H1 (cell line): ENCODE measurements at regions of chr22 and their contacts with region 1.

Region 1: GRCh38 chr22:25903294-25903693 is 161.3 kb downstream of the MYO18B start:
- DNase-seq: peak; percentile 31 to 90
- H3K4me3 ChIP-seq: no peak overlapping the region
- H3K27ac ChIP-seq: no peak overlapping the region
- H3K4me1 ChIP-seq: 0 out of 7 replicates have a peak, but pooled peaks cover 0 to 4% (median 0%) of the 10 kb centered on the region in 4 experiments
- H3K27me3 ChIP-seq: no peaks in the 10 kb centered on the region
- CTCF ChIP-seq: peak; percentile 87 to 92 (median 88)
- EP300 ChIP-seq: no peak
- POLR2A ChIP-seq: no peak
- RAD21 ChIP-seq: peak; percentile 61 to 78

Region 2: GRCh38 chr22:25797498-25798290 is 105.6 kb before region 1 on chr22:
- CTCF ChIA-PET with region 1: no interaction called
- POLR2A ChIA-PET with region 1: no interaction called
- DNase-seq: no peak
- H3K4me3 ChIP-seq: no peak overlapping the region
- H3K27ac ChIP-seq: no peak overlapping the region
- H3K4me1 ChIP-seq: no peaks in the 10 kb centered on the region
- H3K27me3 ChIP-seq: no peaks in the 10 kb centered on the region; a peak in 1 of 7 replicates
- CTCF ChIP-seq: no peak
- EP300 ChIP-seq: no peak
- POLR2A ChIP-seq: no peak
- RAD21 ChIP-seq: no peak

Region 3: DNA sequence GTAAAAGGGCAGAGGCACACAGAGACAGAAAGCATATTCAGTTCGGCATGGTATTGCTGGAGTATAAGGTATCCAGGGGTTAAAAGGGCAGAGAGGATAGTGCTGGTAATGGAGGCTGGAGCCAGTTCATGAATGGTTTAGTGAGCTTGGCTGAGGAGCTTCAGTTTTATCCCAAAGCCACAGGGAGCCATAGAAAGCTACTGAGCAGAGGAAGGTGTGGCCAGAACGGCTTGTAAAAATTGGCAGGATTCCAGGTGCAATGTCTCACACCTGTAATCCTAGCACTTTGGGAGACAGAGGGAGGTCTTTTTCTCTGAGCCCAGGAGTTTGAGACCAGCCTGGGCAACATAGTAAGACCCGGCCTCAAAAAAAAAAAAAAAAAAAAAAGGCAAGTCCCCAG is 24.7 kb after region 1 on chr22:
- CTCF ChIA-PET with region 1: interaction called, 12 read pairs
- POLR2A ChIA-PET with region 1: no interaction called
- DNase-seq: no peak
- H3K4me3 ChIP-seq: peak overlapping the region in 1 of 4 experiments; percentile 41; a peak in 1 of 8 replicates
- H3K27ac ChIP-seq: peak overlapping the region; percentile 60; the same call in 1 of the 2 replicates
- H3K4me1 ChIP-seq: peaks cover 2 to 24% (median 11%) of the 10 kb centered on the region in 4 experiments
- H3K27me3 ChIP-seq: no peaks in the 10 kb centered on the region; a peak in 2 of 7 replicates
- CTCF ChIP-seq: no peak
- EP300 ChIP-seq: no peak
- POLR2A ChIP-seq: no peak
- RAD21 ChIP-seq: no peak

Region 4: DNA sequence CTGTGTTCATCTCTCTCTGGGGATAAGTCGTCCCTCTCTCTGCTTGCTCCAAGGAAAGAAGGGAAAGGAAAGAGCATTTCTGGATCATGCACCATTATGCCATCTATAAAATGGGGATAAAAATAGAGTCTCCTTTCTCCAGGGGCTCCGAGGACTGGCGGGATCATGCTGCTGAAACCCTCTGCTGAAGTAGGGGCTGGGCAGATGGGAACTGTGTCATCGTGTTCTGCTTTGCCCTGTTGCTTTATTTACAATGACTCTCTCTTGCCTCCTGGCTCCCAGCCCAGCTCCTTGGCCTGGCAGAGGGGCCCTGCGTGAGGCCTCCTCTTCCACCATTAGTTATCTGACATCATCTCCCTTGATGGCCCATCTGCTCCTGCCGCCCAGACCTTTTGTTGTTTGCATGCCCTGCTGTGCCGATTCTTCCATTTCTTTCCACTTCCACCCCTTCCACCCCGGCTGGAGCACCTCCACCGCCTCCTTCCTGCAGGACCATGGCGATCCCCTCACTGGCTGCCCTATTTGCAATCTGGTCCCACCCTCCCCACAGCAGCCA is 39.6 kb after region 1 on chr22:
- CTCF ChIA-PET with region 1: interaction called, 17 read pairs
- POLR2A ChIA-PET with region 1: no interaction called
- DNase-seq: no peak
- H3K4me3 ChIP-seq: no peak overlapping the region
- H3K27ac ChIP-seq: no peak overlapping the region
- H3K4me1 ChIP-seq: peaks cover 0 to 13% (median 4%) of the 10 kb centered on the region in 4 experiments; a peak in 5 of 7 replicates
- H3K27me3 ChIP-seq: no peaks in the 10 kb centered on the region; a peak in 1 of 7 replicates
- CTCF ChIP-seq: no peak
- EP300 ChIP-seq: no peak
- POLR2A ChIP-seq: no peak
- RAD21 ChIP-seq: no peak

Region 5: DNA sequence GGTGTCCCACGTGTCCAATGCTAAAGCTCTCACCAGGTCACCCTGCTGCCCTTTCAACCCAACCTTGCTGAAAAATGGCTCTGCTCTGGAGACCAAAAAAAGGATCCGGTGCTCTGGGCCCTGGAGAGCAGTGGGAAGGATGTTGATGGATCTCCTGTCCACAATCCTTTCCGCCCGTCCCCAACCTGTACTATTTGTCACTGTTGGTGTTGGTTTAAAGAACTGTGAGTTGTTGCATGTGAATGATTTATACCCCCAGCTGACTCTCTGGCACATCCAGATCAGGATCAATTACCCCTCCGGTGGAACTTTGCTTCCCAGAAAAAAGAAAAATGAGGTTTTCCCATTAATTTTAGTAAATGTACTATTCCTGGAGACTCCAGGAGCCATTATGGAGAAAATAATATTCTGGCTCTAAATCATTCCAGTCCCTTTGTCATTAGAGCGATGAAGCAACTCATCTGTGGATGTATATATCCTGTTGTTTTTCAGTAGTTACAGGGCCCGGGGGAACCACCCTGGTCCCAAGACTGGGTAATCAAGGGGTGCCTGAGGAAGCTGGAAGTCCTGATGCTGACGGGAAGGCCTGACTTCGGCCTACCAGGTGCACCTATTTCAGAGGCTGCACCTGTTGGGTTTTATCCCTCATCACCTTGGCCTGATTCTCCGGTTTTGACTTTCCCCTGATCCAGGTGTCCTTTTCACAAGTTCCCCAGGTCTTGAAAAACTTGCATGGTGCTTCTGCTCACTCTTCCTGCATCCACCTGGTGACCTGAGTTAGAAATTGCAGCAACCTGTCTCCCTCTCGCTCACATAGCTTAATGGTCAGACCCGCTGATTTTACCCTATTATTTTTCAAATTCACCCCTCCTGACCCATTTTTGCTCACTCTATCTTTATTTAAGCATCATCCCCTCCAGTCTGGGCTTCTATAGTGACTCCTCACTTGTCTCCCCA is 56.8 kb after region 1 on chr22:
- CTCF ChIA-PET with region 1: interaction called, 27 read pairs
- POLR2A ChIA-PET with region 1: no interaction called
- DNase-seq: no peak
- H3K4me3 ChIP-seq: no peak overlapping the region
- H3K27ac ChIP-seq: no peak overlapping the region
- H3K4me1 ChIP-seq: no peaks in the 10 kb centered on the region
- H3K27me3 ChIP-seq: no peaks in the 10 kb centered on the region
- CTCF ChIP-seq: peak in 2 of 3 experiments; percentile 58 to 59; a peak in 3 of 4 replicates
- EP300 ChIP-seq: no peak
- POLR2A ChIP-seq: no peak
- RAD21 ChIP-seq: peak; percentile 50 to 64